Calu3 (cell line): ENCODE measurements at regions of chr15 and their contacts with region 1.

Region 1: GRCh38 chr15:94059013-94059587 is 172.3 kb upstream of the MCTP2 start:
- DNase-seq: no peak
- H3K4me3 Mint-ChIP-seq: no peak overlapping the region
- H3K27ac Mint-ChIP-seq: no peak overlapping the region
- H3K4me1 Mint-ChIP-seq: no peaks in the 10 kb centered on the region
- H3K27me3 Mint-ChIP-seq: no peaks in the 10 kb centered on the region
- CTCF ChIP-seq: no peak

Region 2: GRCh38 chr15:93982226-93982727 is 76.8 kb before region 1 on chr15:
- CTCF ChIA-PET with region 1: no interaction called
- intact Hi-C with region 1: no loop called
- DNase-seq: no peak
- H3K4me3 Mint-ChIP-seq: no peak overlapping the region
- H3K27ac Mint-ChIP-seq: no peak overlapping the region
- H3K4me1 Mint-ChIP-seq: no peaks in the 10 kb centered on the region
- H3K27me3 Mint-ChIP-seq: peaks cover 12% of the 10 kb centered on the region
- CTCF ChIP-seq: no peak

Region 3: GRCh38 chr15:94040541-94041248 is 18.4 kb before region 1 on chr15:
- CTCF ChIA-PET with region 1: no interaction called
- intact Hi-C with region 1: loop called (anchors 1 kb)
- DNase-seq: no peak
- H3K4me3 Mint-ChIP-seq: no peak overlapping the region
- H3K27ac Mint-ChIP-seq: no peak overlapping the region
- H3K4me1 Mint-ChIP-seq: no peaks in the 10 kb centered on the region
- H3K27me3 Mint-ChIP-seq: no peaks in the 10 kb centered on the region
- CTCF ChIP-seq: no peak